Activated CD8-positive, alpha-beta memory T cell treated with anti-CD3 and anti-CD28 coated beads, Interleukin-2, amount 10 ng/mL, durations not matched to agents 7 days and 5 days (primary cell): ENCODE measurements at regions of chr10 and their contacts with region 1.

Region 1: GRCh38 chr10:47047671-47048525 is 136.7 kb downstream of the PTPN20 start:
- DNase-seq: peak; percentile 78
- ATAC-seq: peak; percentile 72
- H3K4me3 Mint-ChIP-seq: no peak overlapping the region
- H3K27ac Mint-ChIP-seq: no peak overlapping the region
- H3K4me1 Mint-ChIP-seq: peaks cover 9% of the 10 kb centered on the region
- H3K27me3 Mint-ChIP-seq: no peaks in the 10 kb centered on the region

Region 2: GRCh38 chr10:47024399-47025252 is 23.3 kb before region 1 on chr10:
- CTCF ChIA-PET with region 1: interaction called, 15 read pairs
- DNase-seq: peak; percentile 74
- ATAC-seq: peak; percentile 74
- H3K4me3 Mint-ChIP-seq: no peak overlapping the region
- H3K27ac Mint-ChIP-seq: no peak overlapping the region
- H3K4me1 Mint-ChIP-seq: peaks cover 4% of the 10 kb centered on the region
- H3K27me3 Mint-ChIP-seq: no peaks in the 10 kb centered on the region

Region 3: DNA sequence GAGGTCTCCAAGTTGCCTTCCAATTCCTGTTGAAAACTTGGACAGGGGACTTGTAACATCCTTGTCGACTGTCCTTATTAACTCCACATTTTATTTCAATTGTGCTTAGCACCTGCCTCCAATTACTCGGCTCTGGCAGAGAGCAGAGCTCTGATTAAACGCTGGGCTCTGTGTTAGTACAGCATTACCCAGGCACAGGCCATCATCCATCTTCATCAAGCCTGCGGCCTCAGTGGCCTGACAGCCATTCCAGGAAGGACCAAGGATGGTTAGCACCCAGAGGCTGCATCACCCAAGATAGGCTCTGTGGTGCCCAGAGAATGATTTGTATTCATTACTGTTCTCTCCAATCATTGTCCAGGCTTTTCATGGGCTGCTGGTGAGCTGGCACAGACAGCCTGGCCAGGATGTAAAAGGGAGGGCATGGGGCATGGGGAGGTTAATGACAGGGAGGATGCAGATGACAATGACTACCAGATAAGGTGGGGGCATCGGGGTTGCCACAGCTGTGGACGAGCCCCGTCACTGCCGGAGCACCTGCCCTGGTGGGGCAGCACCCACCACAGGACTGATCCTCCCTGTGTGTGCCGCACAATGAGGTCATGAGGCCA is 13.4 kb before region 1 on chr10:
- CTCF ChIA-PET with region 1: interaction called, 15 read pairs
- DNase-seq: no peak
- ATAC-seq: no peak
- H3K4me3 Mint-ChIP-seq: no peak overlapping the region
- H3K27ac Mint-ChIP-seq: no peak overlapping the region
- H3K4me1 Mint-ChIP-seq: no peaks in the 10 kb centered on the region
- H3K27me3 Mint-ChIP-seq: no peaks in the 10 kb centered on the region

Region 4: DNA sequence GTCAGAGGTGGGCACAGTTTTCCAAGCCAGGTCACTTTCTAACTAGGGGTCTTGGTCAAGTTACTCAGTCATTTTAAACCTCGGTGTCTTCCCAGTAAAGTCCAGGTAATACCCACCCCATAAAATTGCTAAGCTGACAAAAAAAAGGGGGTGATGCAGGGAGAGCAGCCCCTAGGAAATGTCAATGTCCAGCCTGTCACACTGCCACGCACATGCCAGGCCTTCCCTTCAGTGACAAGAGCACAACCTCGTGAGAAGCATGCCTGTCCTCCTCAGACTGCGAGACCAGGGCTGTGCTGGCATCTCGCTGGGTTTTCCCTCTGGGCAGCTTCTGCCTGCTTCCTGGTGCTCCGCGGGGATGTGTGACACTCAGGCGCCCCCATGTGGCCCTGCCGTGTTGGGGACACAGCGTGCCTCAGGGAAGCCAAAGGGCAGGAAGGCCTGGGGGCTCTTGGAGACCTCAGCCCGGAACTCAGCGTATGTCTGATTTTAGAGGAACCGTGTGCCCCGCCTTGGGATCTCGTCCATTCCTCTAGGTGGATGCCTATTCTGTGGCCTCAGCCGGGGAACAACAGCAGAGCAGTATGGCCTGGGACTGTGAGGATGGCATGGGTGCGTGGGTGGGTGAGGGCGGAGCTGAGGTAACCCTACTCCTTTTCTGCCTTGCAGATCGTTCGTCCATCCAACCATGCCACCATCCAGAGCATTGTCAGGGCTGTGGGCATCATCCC is 264.2 kb after region 1 on chr10:
- CTCF ChIA-PET with region 1: interaction called, 155 read pairs
- DNase-seq: peak; percentile 85
- ATAC-seq: peak; percentile 86
- H3K4me3 Mint-ChIP-seq: no peak overlapping the region
- H3K27ac Mint-ChIP-seq: peak overlapping the region; percentile 32
- H3K4me1 Mint-ChIP-seq: peaks cover 14% of the 10 kb centered on the region
- H3K27me3 Mint-ChIP-seq: no peaks in the 10 kb centered on the region

Region 5: DNA sequence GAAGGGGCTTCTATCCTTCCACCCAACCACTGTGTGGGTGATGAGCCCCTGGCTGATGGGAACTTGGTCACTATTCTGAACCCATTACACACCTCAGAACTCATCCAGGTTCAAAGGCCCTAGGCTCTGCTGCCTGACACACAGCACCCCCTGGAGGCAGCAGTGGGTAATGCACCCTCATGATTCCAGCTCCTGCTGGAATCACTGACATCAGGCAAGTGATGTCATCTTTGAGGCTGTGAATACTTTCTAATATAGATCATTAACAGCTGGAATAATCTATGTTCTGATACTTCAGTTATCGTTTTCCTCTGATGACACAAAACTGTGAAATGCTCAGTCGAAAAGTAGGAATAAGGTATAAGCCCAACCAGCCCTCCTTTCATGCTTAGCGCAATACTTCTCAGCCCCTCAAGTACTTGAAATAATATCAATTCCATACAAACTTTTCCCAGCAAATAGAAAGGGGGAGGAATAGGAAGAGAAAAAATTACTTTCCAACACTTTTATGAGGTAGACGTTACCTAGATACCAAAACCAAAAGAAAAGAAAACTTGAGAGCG is 292.8 kb after region 1 on chr10:
- CTCF ChIA-PET with region 1: interaction called, 13 read pairs
- DNase-seq: peak; percentile 68
- ATAC-seq: peak; percentile 45
- H3K4me3 Mint-ChIP-seq: no peak overlapping the region
- H3K27ac Mint-ChIP-seq: no peak overlapping the region
- H3K4me1 Mint-ChIP-seq: no peaks in the 10 kb centered on the region
- H3K27me3 Mint-ChIP-seq: peaks cover 37% of the 10 kb centered on the region

Region 6: DNA sequence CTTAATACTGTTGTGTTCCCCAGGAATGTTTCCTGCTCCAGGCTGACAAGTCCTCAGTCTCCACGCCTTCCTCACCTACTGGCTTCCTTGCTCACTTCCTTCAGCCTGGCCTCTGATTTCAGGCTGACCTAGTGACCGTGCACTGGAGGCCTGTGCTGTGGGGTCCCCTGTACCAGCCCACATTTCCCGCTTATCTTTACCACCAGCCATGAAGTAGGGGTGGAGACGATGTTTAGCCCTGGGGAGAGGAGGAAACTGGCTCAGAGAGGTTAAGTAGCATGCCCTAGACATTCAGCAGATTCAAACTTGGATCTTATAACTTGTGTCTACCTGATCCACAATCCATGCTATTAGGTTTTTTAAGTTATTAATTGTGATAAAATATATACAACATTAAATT is 341.0 kb after region 1 on chr10:
- CTCF ChIA-PET with region 1: no interaction called
- DNase-seq: peak; percentile 5
- ATAC-seq: no peak
- H3K4me3 Mint-ChIP-seq: no peak overlapping the region
- H3K27ac Mint-ChIP-seq: no peak overlapping the region
- H3K4me1 Mint-ChIP-seq: peaks cover 4% of the 10 kb centered on the region
- H3K27me3 Mint-ChIP-seq: peaks cover 52% of the 10 kb centered on the region